PC-3 (cell line): ENCODE measurements at regions of chr1 and their contacts with region 1.

Region 1: GRCh38 chr1:19872190-19872589 is 10.0 kb upstream of the OTUD3 start:
- DNase-seq: peak; percentile 98
- ATAC-seq: peak; percentile 95
- H3K4me3 ChIP-seq: no peak overlapping the region
- H3K27ac ChIP-seq: peak overlapping the region; percentile 82
- H3K4me1 ChIP-seq: peaks cover 35% of the 10 kb centered on the region
- H3K27me3 ChIP-seq: no peaks in the 10 kb centered on the region
- CTCF ChIP-seq: peak; percentile 77

Region 2: GRCh38 chr1:19715334-19716203 is 156.6 kb before region 1 on chr1:
- CTCF ChIA-PET with region 1: no interaction called
- POLR2A ChIA-PET with region 1: no interaction called
- intact Hi-C with region 1: loop called (anchors 1 kb)
- DNase-seq: peak; percentile 97
- ATAC-seq: peak; percentile 99
- H3K4me3 ChIP-seq: no peak overlapping the region
- H3K27ac ChIP-seq: no peak overlapping the region
- H3K4me1 ChIP-seq: no peaks in the 10 kb centered on the region
- H3K27me3 ChIP-seq: no peaks in the 10 kb centered on the region
- CTCF ChIP-seq: peak; percentile 90

Region 3: DNA sequence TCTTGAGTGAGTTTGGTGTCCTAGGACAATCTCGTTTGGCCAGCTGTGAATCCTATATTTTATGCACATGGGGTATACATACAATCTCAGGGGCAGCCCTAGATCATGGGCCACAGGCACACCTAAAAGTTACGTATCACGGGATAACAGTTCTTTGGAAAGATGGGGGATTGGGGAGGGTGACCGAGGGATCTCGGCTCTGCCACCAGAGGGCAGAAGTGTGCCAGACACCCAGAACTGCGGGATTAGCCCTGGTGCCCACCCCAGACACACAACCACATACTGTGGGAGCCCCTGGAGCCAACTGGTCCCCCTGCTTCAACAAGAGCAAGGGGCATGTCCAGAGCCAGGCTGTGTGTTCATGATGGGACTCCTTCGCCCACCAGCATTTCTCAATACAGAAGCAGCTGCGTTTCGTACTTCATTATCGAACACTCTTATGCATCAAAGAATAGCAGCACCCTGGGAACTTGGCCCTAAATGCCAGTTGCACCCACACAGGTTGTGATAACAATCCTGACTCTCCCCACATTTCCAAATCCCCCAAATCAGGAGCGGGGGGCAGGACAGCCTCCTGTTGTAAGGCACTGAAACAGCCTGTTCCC is 109.9 kb before region 1 on chr1:
- CTCF ChIA-PET with region 1: interaction called, 6 read pairs
- POLR2A ChIA-PET with region 1: no interaction called
- intact Hi-C with region 1: loop called (anchors 1 kb)
- DNase-seq: peak; percentile 57
- ATAC-seq: peak; percentile 19
- H3K4me3 ChIP-seq: no peak overlapping the region
- H3K27ac ChIP-seq: no peak overlapping the region
- H3K4me1 ChIP-seq: peaks cover 32% of the 10 kb centered on the region
- H3K27me3 ChIP-seq: no peaks in the 10 kb centered on the region
- CTCF ChIP-seq: peak; percentile 93

Region 4: DNA sequence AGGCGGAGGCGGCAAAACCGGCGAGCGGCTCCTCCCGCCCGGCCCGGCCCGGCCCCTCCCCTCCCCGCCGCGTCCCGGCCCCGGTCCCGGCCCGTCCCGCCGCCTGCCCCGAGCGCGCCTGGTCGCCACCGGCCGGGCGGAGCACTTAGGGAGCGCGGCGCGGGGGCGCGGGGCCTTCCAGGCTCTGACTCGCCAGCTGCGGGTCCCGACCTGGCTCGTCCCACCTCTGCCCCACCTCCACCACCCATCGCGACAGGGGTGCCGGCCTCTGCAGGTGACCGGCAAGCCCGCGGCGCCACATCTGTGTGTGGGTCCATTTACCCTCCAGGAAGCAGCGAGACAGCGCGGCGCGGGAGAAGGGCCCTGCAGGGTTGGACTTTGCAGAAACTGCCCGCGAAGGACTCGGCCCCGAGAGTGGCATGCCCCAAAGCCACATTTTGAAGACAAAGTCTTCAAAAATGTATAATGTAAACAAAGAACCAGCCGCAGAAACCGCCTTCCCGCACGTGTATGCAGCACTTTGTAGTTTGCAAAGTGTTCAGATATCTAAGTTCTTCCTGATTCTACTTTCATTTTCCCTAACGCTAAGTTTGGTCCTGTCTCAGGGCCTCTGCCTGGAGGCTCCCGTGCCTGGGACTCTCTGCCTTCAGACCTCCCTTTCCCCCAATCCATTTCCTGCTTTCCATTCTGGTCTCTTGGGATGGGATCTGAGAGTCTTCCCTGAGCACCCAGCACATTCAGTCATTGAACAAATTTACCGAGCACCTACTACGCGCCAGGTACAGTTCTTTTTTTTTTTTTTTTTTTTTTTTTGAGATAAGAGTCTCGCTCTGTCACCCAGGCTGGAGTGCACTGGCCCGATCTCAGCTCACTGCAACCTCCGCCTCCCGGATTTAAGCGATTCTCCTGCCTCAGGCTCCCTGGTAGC is 72.0 kb before region 1 on chr1 and contains the start of gene TMCO4:
- CTCF ChIA-PET with region 1: no interaction called
- POLR2A ChIA-PET with region 1: no interaction called
- intact Hi-C with region 1: loop called (anchors 2 kb)
- DNase-seq: peak; percentile 51
- ATAC-seq: peak; percentile 74
- H3K4me3 ChIP-seq: peak within 1 kb of the TSS; percentile 75
- H3K27ac ChIP-seq: peak within 1 kb of the TSS; percentile 59
- H3K4me1 ChIP-seq: peaks cover 17% of the 10 kb centered on the region; the same call in 1 of the 2 replicates
- H3K27me3 ChIP-seq: no peaks in the 10 kb centered on the region
- CTCF ChIP-seq: no peak
- total RNA-seq, gene TMCO4: 16.0 and 19.7 TPM in 2 replicates